OCI-LY7 (cell line): ENCODE measurements at regions of chr7 and their contacts with region 1.

Region 1: GRCh38 chr7:73721377-73721817 is 1.9 kb upstream of the STX1A start:
- DNase-seq: no peak
- H3K4me3 ChIP-seq: no peak overlapping the region
- H3K27ac ChIP-seq: no peak overlapping the region
- H3K4me1 ChIP-seq: peaks cover 15% of the 10 kb centered on the region
- CTCF ChIP-seq: no peak

Region 2: DNA sequence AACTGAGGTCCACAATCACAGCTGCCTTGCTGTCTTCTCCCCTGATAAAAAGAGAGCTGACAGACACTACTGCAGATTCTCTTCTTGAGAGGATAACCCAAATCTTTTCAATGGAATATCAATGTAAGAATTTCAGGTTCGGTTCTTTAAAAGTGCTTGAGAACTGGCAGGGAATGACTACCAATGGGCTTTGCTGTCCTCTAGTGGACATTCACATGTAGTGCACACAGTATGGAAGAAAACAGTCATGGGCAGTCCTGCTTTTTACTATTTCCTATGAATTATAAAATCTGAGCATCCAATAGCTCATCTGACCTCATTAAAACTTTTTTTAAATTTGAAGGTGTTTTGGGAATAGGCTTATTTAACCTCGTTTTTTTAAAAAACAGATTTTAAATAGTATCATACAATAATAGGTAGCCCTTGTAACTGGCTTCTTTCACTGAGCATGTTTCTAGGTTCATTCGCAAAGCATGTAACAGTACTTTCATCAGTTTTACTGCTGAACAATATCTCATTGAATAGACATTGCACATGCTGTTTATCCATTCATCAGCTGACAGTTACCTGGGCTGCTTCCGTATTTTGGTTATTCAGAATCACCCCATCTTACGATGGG is 269.5 kb before region 1 on chr7:
- CTCF ChIA-PET with region 1: no interaction called
- POLR2A ChIA-PET with region 1: no interaction called
- intact Hi-C with region 1: loop called (anchors 10 kb)
- DNase-seq: peak; percentile 62
- H3K4me3 ChIP-seq: no peak overlapping the region
- H3K27ac ChIP-seq: no peak overlapping the region
- H3K4me1 ChIP-seq: no peaks in the 10 kb centered on the region
- CTCF ChIP-seq: peak; percentile 100

Region 3: GRCh38 chr7:73606801-73607691 is 114.4 kb before region 1 on chr7:
- CTCF ChIA-PET with region 1: interaction called, 5 read pairs
- POLR2A ChIA-PET with region 1: interaction called, 3 read pairs
- intact Hi-C with region 1: loop called (anchors 1 kb)
- DNase-seq: peak; percentile 74
- H3K4me3 ChIP-seq: no peak overlapping the region
- H3K27ac ChIP-seq: no peak overlapping the region
- H3K4me1 ChIP-seq: no peaks in the 10 kb centered on the region
- CTCF ChIP-seq: peak; percentile 96

Region 4: GRCh38 chr7:73683056-73683964 is 38.1 kb before region 1 on chr7 and contains the starts of genes BUD23 and DNAJC30:
- CTCF ChIA-PET with region 1: no interaction called
- POLR2A ChIA-PET with region 1: no interaction called
- intact Hi-C with region 1: loop called (anchors 2 kb)
- DNase-seq: peak; percentile 95
- H3K4me3 ChIP-seq: peak within 1 kb of the TSS; percentile 85
- H3K27ac ChIP-seq: peak within 1 kb of the TSS; percentile 39
- H3K4me1 ChIP-seq: peaks cover 32% of the 10 kb centered on the region
- CTCF ChIP-seq: no peak
- total RNA-seq, gene BUD23: 58.1 and 65.0 TPM in 2 replicates
- total RNA-seq, gene DNAJC30: 4.0 and 5.9 TPM in 2 replicates

Region 5: GRCh38 chr7:73738612-73739374 is 17.4 kb after region 1 on chr7 and contains the start of gene ABHD11:
- CTCF ChIA-PET with region 1: no interaction called
- POLR2A ChIA-PET with region 1: no interaction called
- intact Hi-C with region 1: no loop called
- DNase-seq: peak; percentile 93
- H3K4me3 ChIP-seq: peak within 1 kb of the TSS; percentile 91
- H3K27ac ChIP-seq: peak within 1 kb of the TSS; percentile 78
- H3K4me1 ChIP-seq: peaks cover 49% of the 10 kb centered on the region
- CTCF ChIP-seq: peak; percentile 41; the same call in 1 of the 2 replicates
- total RNA-seq, gene ABHD11: 25.8 and 27.4 TPM in 2 replicates